Gastrocnemius medialis (tissue), 4 donors: ENCODE measurements at regions of chr4 and their contacts with region 1.

Region 1: GRCh38 chr4:1746265-1746691 is 25.0 kb downstream of the TACC3 start:
- DNase-seq: peak in 1 of 2 donors; percentile 41
- ATAC-seq: peak in 1 of 2 donors; percentile 63
- H3K4me3 ChIP-seq: no peak overlapping the region
- H3K27ac ChIP-seq: no peak overlapping the region
- H3K4me1 ChIP-seq: no peaks in the 10 kb centered on the region
- H3K27me3 ChIP-seq: no peaks in the 10 kb centered on the region
- CTCF ChIP-seq: peak; percentile 59 to 87 (median 76)
- POLR2A ChIP-seq: no peak

Region 2: DNA sequence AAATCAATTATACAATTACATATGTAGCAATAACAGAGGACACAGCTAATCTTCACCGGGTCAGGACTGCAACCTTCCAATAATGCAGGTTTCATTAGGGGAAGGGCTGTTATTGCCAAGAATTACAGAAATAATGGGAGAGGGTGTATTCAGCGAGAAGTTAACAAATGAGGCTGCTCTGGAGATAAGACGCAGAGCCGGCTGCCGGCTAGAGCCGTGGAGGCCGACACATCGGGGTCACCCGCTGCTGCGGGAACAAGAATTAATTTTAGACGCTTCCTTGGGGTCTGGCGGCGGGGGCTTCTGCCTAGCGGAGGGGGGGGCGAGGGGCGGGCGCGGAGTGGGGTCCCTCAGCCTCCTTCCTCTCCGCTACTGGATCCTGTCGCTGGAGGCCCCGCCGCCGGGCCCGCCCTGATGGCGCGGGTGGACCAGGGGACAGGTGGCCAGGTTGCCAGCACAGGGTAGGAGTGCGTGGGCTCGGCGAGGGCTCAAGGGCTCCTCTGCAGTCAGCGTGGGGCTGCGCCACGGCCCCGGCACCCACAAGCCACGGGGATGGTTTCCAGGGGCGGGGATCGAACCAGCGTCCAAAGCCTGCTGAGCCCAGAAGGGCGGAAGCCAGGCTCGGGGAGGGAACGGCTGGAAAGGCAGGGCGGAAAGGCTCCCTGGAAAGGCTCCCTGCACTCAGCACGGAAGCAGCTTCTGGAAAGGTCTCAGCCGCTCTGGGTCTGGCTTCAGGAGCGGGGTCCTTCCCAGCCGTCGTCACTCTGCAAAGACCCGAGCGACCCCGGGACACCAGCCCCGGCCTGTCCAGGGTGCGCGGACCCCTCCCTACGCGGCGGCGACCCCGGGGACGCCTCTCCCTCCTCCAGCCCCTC is 226.3 kb before region 1 on chr4:
- in situ Hi-C with region 1: no loop called
- intact Hi-C with region 1: no loop called
- DNase-seq: no peak
- ATAC-seq: no peak
- H3K4me3 ChIP-seq: peak overlapping the region in 1 of 4 donors; percentile 40
- H3K27ac ChIP-seq: peak overlapping the region in 1 of 4 donors; percentile 59
- H3K4me1 ChIP-seq: no peaks in the 10 kb centered on the region
- H3K27me3 ChIP-seq: peaks cover 34 to 67% (median 40%) of the 10 kb centered on the region in 3 donors
- CTCF ChIP-seq: no peak
- POLR2A ChIP-seq: no peak

Region 3: GRCh38 chr4:1544861-1545281 is 201.4 kb before region 1 on chr4:
- in situ Hi-C with region 1: no loop called
- intact Hi-C with region 1: no loop called
- DNase-seq: no peak
- ATAC-seq: no peak
- H3K4me3 ChIP-seq: peak overlapping the region in 1 of 4 donors; percentile 37
- H3K27ac ChIP-seq: peak overlapping the region in 3 of 4 donors; percentile 38 to 58 (median 55)
- H3K4me1 ChIP-seq: peaks cover 0 to 5% of the 10 kb centered on the region in 2 donors
- H3K27me3 ChIP-seq: peaks cover 0 to 4% (median 0%) of the 10 kb centered on the region in 3 donors
- CTCF ChIP-seq: no peak
- POLR2A ChIP-seq: no peak

Region 4: DNA sequence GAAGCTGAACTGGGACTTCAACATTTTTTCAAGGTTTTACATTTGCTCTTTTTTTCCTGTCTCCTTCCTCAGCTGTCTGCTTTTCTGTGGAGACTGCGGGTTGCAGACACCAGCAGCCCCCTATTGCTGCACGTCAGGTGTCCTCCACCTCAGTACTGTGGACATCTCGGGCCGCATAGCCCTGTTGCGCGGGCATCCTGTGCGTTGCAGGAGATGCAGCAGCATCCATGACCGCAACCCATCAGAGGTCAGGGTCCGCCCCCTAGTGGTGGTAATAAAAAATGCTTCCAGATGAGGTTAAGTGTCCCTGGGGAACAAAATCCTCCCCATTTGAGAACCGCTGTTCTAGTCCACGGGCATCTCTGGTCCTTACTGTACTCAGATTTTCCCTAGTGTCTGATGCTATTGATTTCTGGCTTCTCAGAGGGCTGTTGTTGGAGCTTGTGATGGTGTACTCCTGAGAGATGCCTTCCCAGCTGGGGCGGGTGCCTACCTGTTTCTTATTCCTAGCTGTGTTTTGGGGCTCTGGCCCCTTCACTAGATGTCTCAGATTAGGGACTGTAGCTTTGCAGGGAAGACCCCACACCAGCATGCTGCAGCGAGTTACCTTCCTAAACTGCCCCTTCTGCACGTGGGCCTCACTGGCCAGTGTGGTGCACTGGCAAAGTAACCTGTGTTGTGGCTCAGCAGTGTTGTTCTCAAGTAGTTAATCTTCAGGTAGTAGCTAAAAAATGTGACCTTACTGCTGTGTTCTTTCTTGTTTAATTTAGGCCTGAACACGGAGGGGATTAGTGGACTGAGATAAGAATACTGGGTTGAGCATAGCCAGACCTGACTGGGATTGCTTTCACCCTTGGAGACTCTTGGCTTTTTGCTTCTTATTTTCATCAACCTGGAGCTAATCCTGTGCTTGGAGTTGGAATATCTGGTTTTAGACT is 153.1 kb after region 1 on chr4:
- in situ Hi-C with region 1: loop called (anchors 10 to 25 kb)
- intact Hi-C with region 1: loop called (anchors 1 kb)
- DNase-seq: peak; percentile 42 to 54
- ATAC-seq: peak; percentile 86 to 94
- H3K4me3 ChIP-seq: no peak overlapping the region
- H3K27ac ChIP-seq: no peak overlapping the region
- H3K4me1 ChIP-seq: no peaks in the 10 kb centered on the region
- H3K27me3 ChIP-seq: no peaks in the 10 kb centered on the region
- CTCF ChIP-seq: peak; percentile 69 to 91 (median 87)
- POLR2A ChIP-seq: no peak

Region 5: GRCh38 chr4:2402029-2402428 is 655.8 kb after region 1 on chr4:
- in situ Hi-C with region 1: no loop called
- intact Hi-C with region 1: no loop called
- DNase-seq: peak; percentile 67 to 88
- ATAC-seq: peak; percentile 85 to 87
- H3K4me3 ChIP-seq: peak overlapping the region; percentile 27 to 54 (median 44)
- H3K27ac ChIP-seq: peak overlapping the region; percentile 37 to 73 (median 54)
- H3K4me1 ChIP-seq: peaks cover 11 to 28% of the 10 kb centered on the region in 2 donors
- H3K27me3 ChIP-seq: no peaks in the 10 kb centered on the region
- CTCF ChIP-seq: no peak
- POLR2A ChIP-seq: peak; percentile 11 to 25